ENCODE measurements at regions of chr3 and their contacts with region 1.

Region 1: DNA sequence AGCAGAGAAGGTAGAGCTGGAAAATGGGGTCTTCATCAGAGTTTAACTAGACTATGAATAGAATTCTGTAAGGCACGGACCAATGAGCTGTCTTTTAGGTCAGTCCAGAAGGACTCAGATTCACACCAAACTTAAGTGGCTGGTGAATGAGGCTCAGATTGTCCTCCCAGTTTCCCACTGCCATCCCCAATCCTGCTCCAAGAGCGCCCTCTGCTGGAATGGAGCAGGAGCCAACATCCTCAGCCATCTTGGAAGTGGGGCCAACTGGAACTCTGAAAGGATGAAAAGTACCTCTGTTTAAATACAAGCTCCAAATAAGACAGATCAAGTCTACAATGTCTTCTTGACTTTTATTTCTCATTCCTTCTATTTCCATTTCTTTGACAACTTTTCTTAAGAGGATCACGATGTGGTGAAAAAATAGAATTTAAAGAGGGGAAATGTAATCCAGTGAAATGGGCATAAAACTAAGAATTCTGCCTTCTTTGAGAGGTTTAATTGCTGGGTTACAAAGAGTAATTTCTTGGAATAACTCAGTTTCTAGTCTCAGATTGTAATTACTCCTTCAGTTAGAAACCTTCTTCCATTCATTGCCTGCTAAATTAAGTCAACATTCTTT is 217.1 kb upstream of the TPRG1 start:
- DNase-seq: peak; percentile 79
- ATAC-seq: peak; percentile 81
- H3K4me3 ChIP-seq: no peak overlapping the region
- H3K27ac ChIP-seq: no peak overlapping the region
- H3K4me1 ChIP-seq: peaks cover 17 to 22% of the 10 kb centered on the region in 2 experiments
- H3K27me3 ChIP-seq: no peaks in the 10 kb centered on the region
- CTCF ChIP-seq: peak in 2 of 3 experiments; percentile 88 to 97; a peak in 4 of 6 replicates
- POLR2A ChIP-seq: no peak
- RAD21 ChIP-seq: no peak

Region 2: DNA sequence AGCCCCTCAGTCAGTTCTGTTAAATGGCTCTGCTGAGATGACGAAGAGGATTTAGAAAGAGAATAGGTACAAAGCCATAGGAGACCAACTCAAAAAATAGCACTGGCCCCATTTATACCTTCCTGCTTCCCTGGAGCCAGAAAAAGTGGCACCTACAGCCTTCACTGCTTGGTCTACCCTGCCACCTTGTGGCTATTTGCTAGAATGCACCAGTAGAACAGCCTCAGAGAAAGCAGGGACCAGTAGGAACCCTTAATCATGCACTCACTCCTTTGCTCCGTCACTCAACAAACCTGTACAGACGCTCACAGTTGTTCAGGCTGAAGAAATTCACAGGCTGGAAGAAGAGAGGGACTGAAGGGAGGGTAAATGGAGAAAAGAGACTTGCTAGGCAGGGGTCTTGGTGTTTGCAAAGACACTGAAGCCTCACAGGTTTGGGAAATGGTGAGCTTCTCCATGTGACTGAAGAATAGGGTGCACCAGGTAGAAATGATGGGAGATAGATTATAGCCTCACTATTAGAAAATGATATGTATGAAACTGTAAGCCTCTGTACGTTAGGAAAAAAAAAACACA is 1240.2 kb before region 1 on chr3:
- CTCF ChIA-PET with region 1: interaction called, 14 read pairs
- POLR2A ChIA-PET with region 1: no interaction called
- RAD21 ChIA-PET with region 1: no interaction called
- intact Hi-C with region 1: no loop called
- DNase-seq: peak; percentile 72
- ATAC-seq: peak; percentile 96
- H3K4me3 ChIP-seq: no peak overlapping the region
- H3K27ac ChIP-seq: no peak overlapping the region
- H3K4me1 ChIP-seq: peaks cover 3% of the 10 kb centered on the region in 2 experiments; a peak in 2 of 4 replicates
- H3K27me3 ChIP-seq: no peaks in the 10 kb centered on the region
- CTCF ChIP-seq: peak; percentile 85 to 95 (median 93)
- POLR2A ChIP-seq: no peak
- RAD21 ChIP-seq: peak; percentile 97

Region 3: DNA sequence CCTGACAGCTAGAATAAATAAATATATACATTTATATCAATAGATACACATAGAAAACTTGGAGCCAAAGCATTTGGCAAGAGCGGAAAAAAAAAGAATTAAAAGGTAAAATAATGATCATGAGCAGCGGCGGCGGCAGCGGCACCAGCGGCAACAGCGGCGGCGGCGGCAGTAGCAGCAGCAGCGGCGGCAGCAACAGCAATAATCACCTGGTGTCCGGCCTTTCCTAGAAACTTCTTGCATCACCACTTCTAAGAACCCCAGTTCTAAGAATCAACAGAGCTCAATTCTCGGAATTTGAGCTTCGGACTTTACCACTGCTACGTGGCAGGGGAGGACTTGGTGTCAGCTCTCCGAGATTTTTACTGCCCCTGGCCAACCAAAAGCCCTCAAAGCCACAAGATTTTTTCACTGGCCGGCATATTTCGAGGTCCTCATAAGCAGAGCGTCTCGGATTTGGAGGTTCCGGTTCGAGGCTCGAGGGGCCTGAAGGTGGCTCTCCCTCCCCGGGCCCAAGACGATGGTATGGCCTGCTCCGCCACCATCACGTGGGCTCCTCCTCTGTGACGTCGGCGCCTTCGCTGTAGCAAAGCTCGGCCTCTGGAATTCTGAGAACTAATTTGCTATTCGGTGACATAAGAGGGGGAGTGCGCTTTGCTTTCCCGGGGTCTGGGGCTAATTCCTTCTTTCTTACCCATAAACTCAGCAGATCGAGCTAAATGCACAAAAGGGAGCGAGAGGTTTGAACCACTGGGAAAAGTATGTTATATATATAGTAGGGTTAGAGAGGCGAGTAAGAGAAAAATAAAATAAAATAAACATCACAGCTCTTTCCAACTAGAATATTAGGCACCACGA is 1209.3 kb before region 1 on chr3 and contains the start of gene BCL6:
- CTCF ChIA-PET with region 1: interaction called, 260 read pairs
- POLR2A ChIA-PET with region 1: interaction called, 15 read pairs
- RAD21 ChIA-PET with region 1: interaction called in 1 of 2 experiments, 14 read pairs
- intact Hi-C with region 1: loop called (anchors 1 kb)
- DNase-seq: peak; percentile 98
- ATAC-seq: peak; percentile 67
- H3K4me3 ChIP-seq: peak within 1 kb of the TSS; percentile 89 to 91
- H3K27ac ChIP-seq: peak within 1 kb of the TSS; percentile 78
- H3K4me1 ChIP-seq: peaks cover 29 to 65% of the 10 kb centered on the region in 2 experiments; a peak in 3 of 4 replicates
- H3K27me3 ChIP-seq: no peaks in the 10 kb centered on the region
- CTCF ChIP-seq: no peak
- POLR2A ChIP-seq: peak; percentile 86
- RAD21 ChIP-seq: no peak
- total RNA-seq, gene BCL6: 17.5 TPM

Region 4: GRCh38 chr3:188139466-188139865 is 815.2 kb before region 1 on chr3:
- CTCF ChIA-PET with region 1: no interaction called
- POLR2A ChIA-PET with region 1: no interaction called
- RAD21 ChIA-PET with region 1: no interaction called
- intact Hi-C with region 1: no loop called
- DNase-seq: no peak
- ATAC-seq: no peak
- H3K4me3 ChIP-seq: no peak overlapping the region
- H3K27ac ChIP-seq: no peak overlapping the region
- H3K4me1 ChIP-seq: no peaks in the 10 kb centered on the region
- H3K27me3 ChIP-seq: no peaks in the 10 kb centered on the region
- CTCF ChIP-seq: no peak
- POLR2A ChIP-seq: no peak
- RAD21 ChIP-seq: no peak

Region 5: DNA sequence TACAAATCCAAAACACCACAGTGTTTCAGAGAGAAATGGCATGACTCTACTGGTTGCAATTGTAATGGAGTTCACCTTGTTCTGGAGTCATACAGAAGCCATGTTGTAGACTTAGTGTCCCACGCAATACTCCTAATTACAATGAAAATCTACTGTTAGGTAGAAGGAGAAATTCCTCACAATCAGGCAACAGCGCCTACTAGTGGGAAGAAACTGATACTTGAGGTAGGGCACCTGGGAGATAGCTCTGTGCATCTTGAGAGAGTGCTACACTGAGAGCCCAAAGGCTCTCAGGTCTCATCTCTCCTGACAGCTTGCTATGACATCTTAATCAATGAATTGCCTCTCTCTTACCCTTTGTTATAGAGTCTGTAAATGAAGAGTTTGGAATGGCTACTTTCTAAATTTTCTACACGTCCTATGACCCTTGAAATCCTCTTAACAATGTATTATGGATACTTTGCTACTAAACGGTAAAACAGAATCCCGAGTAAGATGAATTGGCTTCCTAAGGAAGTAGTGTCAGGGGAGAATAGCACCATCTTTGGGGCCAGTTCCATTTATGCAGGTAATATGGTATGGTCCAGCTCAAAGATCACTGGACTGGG is 205.6 kb before region 1 on chr3:
- CTCF ChIA-PET with region 1: interaction called, 4 read pairs
- POLR2A ChIA-PET with region 1: no interaction called
- RAD21 ChIA-PET with region 1: no interaction called
- intact Hi-C with region 1: loop called (anchors 2 kb)
- DNase-seq: peak; percentile 15
- ATAC-seq: peak; percentile 85
- H3K4me3 ChIP-seq: no peak overlapping the region
- H3K27ac ChIP-seq: no peak overlapping the region
- H3K4me1 ChIP-seq: no peaks in the 10 kb centered on the region
- H3K27me3 ChIP-seq: no peaks in the 10 kb centered on the region
- CTCF ChIP-seq: peak; percentile 34 to 90 (median 75); a peak in 5 of 6 replicates
- POLR2A ChIP-seq: no peak
- RAD21 ChIP-seq: peak; percentile 59

Region 6: GRCh38 chr3:188978421-188979171 is 23.9 kb after region 1 on chr3:
- CTCF ChIA-PET with region 1: no interaction called
- POLR2A ChIA-PET with region 1: no interaction called
- RAD21 ChIA-PET with region 1: no interaction called
- intact Hi-C with region 1: no loop called
- DNase-seq: no peak
- ATAC-seq: no peak; the same call in 1 of the 2 replicates
- H3K4me3 ChIP-seq: no peak overlapping the region
- H3K27ac ChIP-seq: no peak overlapping the region
- H3K4me1 ChIP-seq: peaks cover 4% of the 10 kb centered on the region in 2 experiments; a peak in 3 of 4 replicates
- H3K27me3 ChIP-seq: no peaks in the 10 kb centered on the region; the same call in 1 of the 2 replicates
- CTCF ChIP-seq: no peak
- POLR2A ChIP-seq: no peak
- RAD21 ChIP-seq: no peak

Region 7: DNA sequence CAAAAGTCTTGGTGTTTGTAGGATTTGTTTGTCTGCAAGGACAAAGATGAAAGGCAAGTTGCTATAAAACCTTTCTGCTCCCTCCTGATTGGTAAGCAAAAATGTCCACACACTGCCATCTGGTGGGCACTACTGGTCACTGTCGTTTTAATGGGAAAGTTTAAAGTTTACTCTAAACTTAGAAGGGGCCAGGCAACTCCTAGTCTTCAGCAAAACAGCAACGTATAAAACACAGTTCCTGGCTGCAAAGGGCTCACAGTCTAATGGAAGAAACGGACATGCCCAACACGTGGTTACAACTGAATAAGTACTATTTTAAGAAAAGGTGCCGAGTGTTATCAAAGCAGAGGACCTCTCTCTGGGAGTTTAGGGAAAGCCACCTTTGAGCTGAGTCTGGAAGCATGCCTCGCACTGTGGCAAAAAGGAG is 193.4 kb after region 1 on chr3:
- CTCF ChIA-PET with region 1: interaction called, 6 read pairs
- POLR2A ChIA-PET with region 1: no interaction called
- RAD21 ChIA-PET with region 1: no interaction called
- intact Hi-C with region 1: loop called (anchors 2 kb)
- DNase-seq: peak; percentile 37
- ATAC-seq: peak; percentile 85
- H3K4me3 ChIP-seq: no peak overlapping the region
- H3K27ac ChIP-seq: no peak overlapping the region
- H3K4me1 ChIP-seq: peaks cover 4 to 5% of the 10 kb centered on the region in 2 experiments; a peak in 2 of 4 replicates
- H3K27me3 ChIP-seq: no peaks in the 10 kb centered on the region
- CTCF ChIP-seq: peak; percentile 71 to 85 (median 79); a peak in 5 of 6 replicates
- POLR2A ChIP-seq: no peak
- RAD21 ChIP-seq: peak; percentile 89

Region 8: DNA sequence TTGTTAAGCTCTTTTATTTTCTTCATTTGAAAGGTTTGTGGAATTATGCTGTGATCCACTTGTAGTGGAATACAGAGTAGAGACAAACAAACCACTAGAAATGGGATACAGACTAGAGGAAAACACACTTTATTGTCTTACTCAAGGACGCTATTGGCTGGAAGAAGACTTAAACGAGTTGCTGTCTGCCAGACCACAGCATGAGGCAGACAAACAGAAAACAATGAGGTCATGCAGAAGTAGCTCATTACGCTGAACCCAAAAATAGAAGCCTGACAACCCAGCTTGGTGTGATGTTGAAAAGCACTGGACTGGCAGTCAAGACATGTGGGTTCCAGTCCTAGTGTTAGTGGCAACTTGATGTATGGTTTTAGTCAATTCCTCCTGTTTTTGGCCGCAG is 1228.4 kb after region 1 on chr3:
- CTCF ChIA-PET with region 1: no interaction called
- POLR2A ChIA-PET with region 1: no interaction called
- RAD21 ChIA-PET with region 1: no interaction called
- intact Hi-C with region 1: no loop called
- DNase-seq: no peak
- ATAC-seq: no peak
- H3K4me3 ChIP-seq: no peak overlapping the region
- H3K27ac ChIP-seq: no peak overlapping the region
- H3K4me1 ChIP-seq: peaks cover 0 to 7% of the 10 kb centered on the region in 2 experiments; a peak in 2 of 4 replicates
- H3K27me3 ChIP-seq: no peaks in the 10 kb centered on the region
- CTCF ChIP-seq: no peak
- POLR2A ChIP-seq: no peak
- RAD21 ChIP-seq: no peak

Measured in HCT116 (cell line).